Activated B cell treated with CpG ODN at 0.5 μM for 24 hours (primary cell): ENCODE measurements at regions of chr2 and their contacts with region 1.

Region 1: DNA sequence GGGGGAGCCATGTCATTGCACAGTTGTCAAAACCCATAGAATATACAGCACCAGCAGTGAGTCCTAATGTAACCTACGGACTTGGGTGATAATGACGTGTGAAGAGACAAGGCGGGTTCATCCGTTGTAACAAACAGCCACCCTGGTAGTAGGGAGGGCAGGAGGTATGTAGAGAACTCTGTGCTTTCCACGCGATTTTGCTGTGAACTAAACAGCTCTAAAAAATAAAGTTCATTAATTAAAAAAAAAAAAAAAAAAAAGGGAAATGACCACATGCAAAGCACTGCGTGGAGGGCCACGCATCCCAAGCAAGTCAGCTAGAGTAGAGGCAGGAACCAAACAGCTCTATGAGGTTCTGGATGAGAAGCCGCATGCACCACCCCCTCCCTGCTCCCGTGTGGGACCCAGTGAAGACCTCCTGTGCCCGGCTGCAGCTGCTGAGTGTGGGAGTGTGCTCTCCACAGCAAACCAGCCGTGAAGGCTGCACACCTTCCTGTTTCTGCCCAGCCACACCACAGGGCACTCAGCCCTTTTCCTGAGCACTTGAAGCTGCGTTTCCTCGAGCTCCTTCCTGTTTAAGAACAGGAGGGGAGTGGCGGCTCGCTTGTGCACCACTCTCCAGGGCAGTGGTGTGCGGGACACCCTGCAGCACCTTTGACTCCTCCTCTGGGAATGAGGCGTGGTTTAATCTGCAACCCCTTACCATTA is 65.6 kb downstream of the ODC1 start:
- DNase-seq: peak; percentile 46
- ATAC-seq: peak; percentile 64
- H3K4me3 Mint-ChIP-seq: peak overlapping the region; percentile 58
- H3K27ac Mint-ChIP-seq: peak overlapping the region; percentile 59
- H3K4me1 Mint-ChIP-seq: peaks cover 91% of the 10 kb centered on the region
- H3K27me3 Mint-ChIP-seq: no peaks in the 10 kb centered on the region
- CTCF ChIP-seq: no peak

Region 2: DNA sequence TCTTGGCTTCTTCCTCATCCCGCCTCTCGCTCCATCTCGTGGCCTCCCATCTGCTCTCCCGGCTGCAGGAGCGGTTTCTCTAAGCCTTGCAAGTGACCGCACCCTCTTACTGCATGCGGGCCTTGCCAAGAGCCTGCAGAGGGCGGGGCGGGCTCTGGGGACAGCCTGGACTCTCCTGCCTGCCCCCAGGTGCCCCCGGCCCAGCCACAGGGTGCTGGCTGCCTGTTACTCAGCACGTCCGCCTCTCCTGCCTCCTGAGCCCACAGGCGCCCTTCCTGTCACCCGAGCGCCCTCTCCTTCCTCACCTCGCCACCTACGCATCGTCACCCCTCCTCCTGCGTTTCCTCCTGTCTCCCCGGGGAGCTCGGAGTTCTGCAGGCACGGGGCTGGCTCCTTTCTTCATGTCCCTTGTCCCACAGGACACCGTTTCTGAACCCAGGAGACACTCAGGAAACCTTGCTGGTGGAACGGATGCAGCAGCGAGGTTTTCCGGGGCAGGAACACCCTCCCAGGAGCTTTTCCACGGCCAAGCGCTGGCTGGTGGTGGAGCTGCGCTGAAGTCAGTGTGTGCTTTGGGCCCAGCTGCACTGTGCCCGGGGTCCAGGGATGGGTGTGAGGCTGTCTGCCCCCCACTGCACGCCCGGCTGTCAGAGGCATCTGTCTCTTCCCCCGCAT is 51.3 kb before region 1 on chr2:
- CTCF ChIA-PET with region 1: no interaction called
- POLR2A ChIA-PET with region 1: interaction called, 7 read pairs
- intact Hi-C with region 1: loop called (anchors 2 kb)
- DNase-seq: peak; percentile 31
- ATAC-seq: peak; percentile 49
- H3K4me3 Mint-ChIP-seq: peak overlapping the region; percentile 79
- H3K27ac Mint-ChIP-seq: peak overlapping the region; percentile 65
- H3K4me1 Mint-ChIP-seq: peaks cover 70% of the 10 kb centered on the region
- H3K27me3 Mint-ChIP-seq: no peaks in the 10 kb centered on the region
- CTCF ChIP-seq: no peak

Region 3: GRCh38 chr2:10360851-10361588 is 21.5 kb before region 1 on chr2:
- CTCF ChIA-PET with region 1: interaction called, 3 read pairs
- POLR2A ChIA-PET with region 1: interaction called, 10 read pairs
- intact Hi-C with region 1: no loop called
- DNase-seq: no peak
- ATAC-seq: no peak
- H3K4me3 Mint-ChIP-seq: no peak overlapping the region
- H3K27ac Mint-ChIP-seq: peak overlapping the region; percentile 42
- H3K4me1 Mint-ChIP-seq: peaks cover 8% of the 10 kb centered on the region
- H3K27me3 Mint-ChIP-seq: no peaks in the 10 kb centered on the region
- CTCF ChIP-seq: no peak

Region 4: DNA sequence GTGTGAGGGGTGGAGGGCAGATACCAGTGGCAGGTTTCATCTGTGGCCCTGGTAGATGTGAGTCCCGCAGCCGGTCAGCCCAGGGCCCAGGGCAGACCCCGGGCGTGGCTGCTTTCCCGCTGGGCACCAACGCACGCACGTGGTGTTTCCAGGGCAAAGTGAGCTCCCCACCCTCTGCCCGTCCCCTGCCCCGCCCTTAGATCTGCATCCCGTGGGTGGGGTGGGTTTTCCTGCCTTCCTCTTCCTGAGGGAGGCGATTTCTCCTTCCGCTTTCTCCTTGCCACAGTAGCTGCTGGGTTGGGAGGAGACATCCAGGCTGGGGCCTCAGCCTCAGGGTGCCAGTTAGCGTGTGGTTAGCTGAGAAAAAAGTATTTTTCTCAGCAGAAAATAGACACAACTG is 16.0 kb after region 1 on chr2:
- CTCF ChIA-PET with region 1: interaction called, 3 read pairs
- POLR2A ChIA-PET with region 1: interaction called, 11 read pairs
- intact Hi-C with region 1: no loop called
- DNase-seq: no peak
- ATAC-seq: no peak
- H3K4me3 Mint-ChIP-seq: no peak overlapping the region
- H3K27ac Mint-ChIP-seq: peak overlapping the region; percentile 72
- H3K4me1 Mint-ChIP-seq: peaks cover 50% of the 10 kb centered on the region
- H3K27me3 Mint-ChIP-seq: no peaks in the 10 kb centered on the region
- CTCF ChIP-seq: no peak